Naive thymus-derived CD4-positive, alpha-beta T cell (primary cell): ENCODE measurements at regions of chr10 and their contacts with region 1.

Region 1: GRCh38 chr10:71771821-71772617 is 1.3 kb downstream of the VSIR start:
- DNase-seq: peak in 2 of 9 donors; percentile 61 to 62
- ATAC-seq: no peak
- H3K4me3 ChIP-seq: peak overlapping the region; percentile 91
- H3K4me3 Mint-ChIP-seq: peak overlapping the region; percentile 86 to 98 (median 95)
- H3K27ac ChIP-seq: peak overlapping the region; percentile 93
- H3K27ac Mint-ChIP-seq: peak overlapping the region; percentile 80 to 98 (median 93)
- H3K4me1 ChIP-seq: peaks cover 70 to 71% of the 10 kb centered on the region in 2 donors
- H3K4me1 Mint-ChIP-seq: peaks cover 59 to 84% (median 79%) of the 10 kb centered on the region in 7 donors
- H3K27me3 ChIP-seq: no peaks in the 10 kb centered on the region
- H3K27me3 Mint-ChIP-seq: no peaks in the 10 kb centered on the region

Region 2: GRCh38 chr10:71314028-71314693 is 457.9 kb before region 1 on chr10:
- CTCF ChIA-PET with region 1: interaction called, 11 read pairs
- POLR2A ChIA-PET with region 1: no interaction called
- intact Hi-C with region 1: loop called (anchors 1 kb)
- DNase-seq: peak; percentile 18 to 56 (median 49)
- ATAC-seq: peak; percentile 62
- H3K4me3 ChIP-seq: no peak overlapping the region
- H3K4me3 Mint-ChIP-seq: peak overlapping the region in 3 of 10 donors; percentile 3 to 48 (median 25)
- H3K27ac ChIP-seq: no peak overlapping the region
- H3K27ac Mint-ChIP-seq: peak overlapping the region in 1 of 9 donors; percentile 55
- H3K4me1 ChIP-seq: peaks cover 5 to 6% of the 10 kb centered on the region in 2 donors
- H3K4me1 Mint-ChIP-seq: peaks cover 0 to 26% (median 13%) of the 10 kb centered on the region in 7 donors
- H3K27me3 ChIP-seq: no peaks in the 10 kb centered on the region
- H3K27me3 Mint-ChIP-seq: peaks cover 0 to 16% (median 14%) of the 10 kb centered on the region in 5 donors

Region 3: DNA sequence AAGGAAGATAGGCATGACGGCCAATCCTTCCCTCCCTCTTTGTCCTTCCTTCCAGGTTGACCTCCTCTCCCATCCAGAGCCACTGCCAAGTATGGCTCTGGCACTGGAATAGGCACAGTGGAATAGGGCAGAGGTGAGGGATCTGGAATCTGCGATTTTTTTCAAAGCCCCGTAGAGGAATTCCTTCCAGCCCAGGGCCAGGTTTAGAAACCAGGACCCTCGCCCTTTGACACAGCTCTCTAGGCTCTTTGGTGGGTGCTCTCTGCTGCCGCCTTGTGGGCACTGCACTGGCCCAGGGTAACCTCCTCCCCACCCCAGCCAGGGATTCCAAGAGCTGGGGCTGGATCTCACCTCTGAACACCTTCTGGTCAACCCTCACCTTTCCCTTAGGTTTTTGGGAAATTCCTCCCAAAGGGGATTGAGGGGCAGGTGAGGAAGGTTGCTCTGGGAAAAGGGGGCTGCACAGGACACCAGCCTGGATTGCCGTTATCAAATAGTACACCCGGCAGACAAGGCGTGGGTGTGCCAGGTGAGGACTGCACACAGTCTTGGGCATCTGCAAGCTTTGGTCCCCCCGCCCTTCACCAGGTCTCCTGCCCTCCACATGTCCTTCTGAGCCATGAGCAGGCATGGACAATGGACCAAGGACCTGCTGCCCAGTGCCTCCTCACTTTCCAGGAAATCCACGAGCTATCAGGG is 75.2 kb before region 1 on chr10:
- CTCF ChIA-PET with region 1: interaction called, 17 read pairs
- POLR2A ChIA-PET with region 1: interaction called, 15 read pairs
- intact Hi-C with region 1: loop called (anchors 1 kb)
- DNase-seq: peak; percentile 36 to 71 (median 54)
- ATAC-seq: peak; percentile 70
- H3K4me3 ChIP-seq: no peak overlapping the region
- H3K4me3 Mint-ChIP-seq: peak overlapping the region in 2 of 10 donors; percentile 16 to 48
- H3K27ac ChIP-seq: no peak overlapping the region
- H3K27ac Mint-ChIP-seq: peak overlapping the region in 1 of 9 donors; percentile 38
- H3K4me1 ChIP-seq: peaks cover 23 to 50% of the 10 kb centered on the region in 2 donors
- H3K4me1 Mint-ChIP-seq: peaks cover 6 to 41% (median 25%) of the 10 kb centered on the region in 7 donors
- H3K27me3 ChIP-seq: no peaks in the 10 kb centered on the region
- H3K27me3 Mint-ChIP-seq: no peaks in the 10 kb centered on the region

Region 4: GRCh38 chr10:71719042-71719441 is 53.0 kb before region 1 on chr10:
- CTCF ChIA-PET with region 1: interaction called, 48 read pairs
- POLR2A ChIA-PET with region 1: interaction called, 136 read pairs
- intact Hi-C with region 1: no loop called
- DNase-seq: no peak
- ATAC-seq: no peak
- H3K4me3 ChIP-seq: no peak overlapping the region
- H3K4me3 Mint-ChIP-seq: no peak overlapping the region
- H3K27ac ChIP-seq: no peak overlapping the region
- H3K27ac Mint-ChIP-seq: peak overlapping the region in 3 of 9 donors; percentile 32 to 49 (median 41)
- H3K4me1 ChIP-seq: peaks cover 26 to 43% of the 10 kb centered on the region in 2 donors
- H3K4me1 Mint-ChIP-seq: peaks cover 25 to 74% (median 44%) of the 10 kb centered on the region in 7 donors
- H3K27me3 ChIP-seq: no peaks in the 10 kb centered on the region
- H3K27me3 Mint-ChIP-seq: no peaks in the 10 kb centered on the region

Region 5: GRCh38 chr10:71748671-71749191 is 23.3 kb before region 1 on chr10:
- CTCF ChIA-PET with region 1: interaction called, 34 read pairs
- POLR2A ChIA-PET with region 1: interaction called, 863 read pairs
- intact Hi-C with region 1: loop called (anchors 1 kb)
- DNase-seq: peak; percentile 53 to 93 (median 88)
- ATAC-seq: peak; percentile 87
- H3K4me3 ChIP-seq: peak overlapping the region; percentile 40
- H3K4me3 Mint-ChIP-seq: peak overlapping the region; percentile 74 to 90 (median 85)
- H3K27ac ChIP-seq: peak overlapping the region; percentile 74
- H3K27ac Mint-ChIP-seq: peak overlapping the region; percentile 95 to 99 (median 98)
- H3K4me1 ChIP-seq: peaks cover 93 to 99% of the 10 kb centered on the region in 2 donors
- H3K4me1 Mint-ChIP-seq: peaks cover 80 to 98% (median 93%) of the 10 kb centered on the region in 7 donors
- H3K27me3 ChIP-seq: no peaks in the 10 kb centered on the region
- H3K27me3 Mint-ChIP-seq: no peaks in the 10 kb centered on the region

Region 6: GRCh38 chr10:71850637-71851464 is 78.8 kb after region 1 on chr10 and contains the start of gene PSAP:
- CTCF ChIA-PET with region 1: no interaction called
- POLR2A ChIA-PET with region 1: interaction called, 8 read pairs
- intact Hi-C with region 1: loop called (anchors 1 kb)
- DNase-seq: peak; percentile 96 to 99 (median 97)
- ATAC-seq: peak; percentile 98
- H3K4me3 ChIP-seq: peak within 1 kb of the TSS; percentile 92
- H3K4me3 Mint-ChIP-seq: peak within 1 kb of the TSS; percentile 91 to 99 (median 96)
- H3K27ac ChIP-seq: peak within 1 kb of the TSS; percentile 79
- H3K27ac Mint-ChIP-seq: peak within 1 kb of the TSS; percentile 79 to 96 (median 86)
- H3K4me1 ChIP-seq: peaks cover 7 to 14% of the 10 kb centered on the region in 2 donors
- H3K4me1 Mint-ChIP-seq: peaks cover 34 to 51% (median 48%) of the 10 kb centered on the region in 7 donors
- H3K27me3 ChIP-seq: no peaks in the 10 kb centered on the region
- H3K27me3 Mint-ChIP-seq: no peaks in the 10 kb centered on the region
- total RNA-seq, gene PSAP: 153 to 1,163 (median 266) TPM

Region 7: DNA sequence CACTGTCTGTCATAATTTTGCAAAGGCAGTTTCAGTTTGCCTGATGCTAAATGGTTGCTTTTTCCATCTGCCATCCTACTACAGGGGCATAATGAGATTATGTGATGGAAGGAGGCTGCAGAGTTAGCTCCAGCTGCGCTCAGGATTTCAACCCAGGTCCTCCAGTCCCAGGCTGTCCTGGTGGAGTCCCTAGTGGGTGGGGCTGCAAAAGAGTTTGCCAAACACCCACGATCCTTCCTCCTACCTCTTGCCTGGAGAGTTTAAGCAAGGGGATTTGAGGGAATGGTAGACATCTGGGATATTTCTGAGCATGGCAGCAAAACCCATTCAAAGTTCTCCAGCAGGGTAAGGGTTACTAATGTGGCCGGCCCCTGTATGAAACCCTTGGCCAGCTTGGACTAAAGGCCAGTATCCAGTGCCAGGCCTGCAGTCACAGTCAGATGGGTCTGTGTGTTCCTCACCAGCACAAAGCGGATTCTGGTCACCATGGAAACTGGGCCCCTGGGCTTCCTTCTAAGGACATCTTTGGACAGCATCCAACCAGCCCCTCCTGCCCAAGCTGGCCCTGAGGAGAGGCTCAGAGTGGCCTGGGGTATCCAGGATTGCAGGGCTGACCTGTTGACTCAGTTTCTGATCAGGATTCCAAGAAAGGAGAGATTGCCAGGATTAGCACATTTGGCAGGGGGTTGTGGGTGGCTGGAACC is 149.5 kb after region 1 on chr10:
- CTCF ChIA-PET with region 1: no interaction called
- POLR2A ChIA-PET with region 1: no interaction called
- intact Hi-C with region 1: no loop called
- DNase-seq: no peak
- ATAC-seq: no peak
- H3K4me3 ChIP-seq: no peak overlapping the region
- H3K4me3 Mint-ChIP-seq: no peak overlapping the region
- H3K27ac ChIP-seq: no peak overlapping the region
- H3K27ac Mint-ChIP-seq: no peak overlapping the region
- H3K4me1 ChIP-seq: no peaks in the 10 kb centered on the region
- H3K4me1 Mint-ChIP-seq: peaks cover 0 to 10% (median 0%) of the 10 kb centered on the region in 7 donors
- H3K27me3 ChIP-seq: no peaks in the 10 kb centered on the region
- H3K27me3 Mint-ChIP-seq: peaks cover 0 to 3% (median 0%) of the 10 kb centered on the region in 5 donors